CD4-positive, alpha-beta T cell (primary cell): ENCODE measurements at regions of chr6 and their contacts with region 1.

Region 1: GRCh38 chr6:97275809-97276208 is 7.2 kb downstream of the MMS22L start:
- DNase-seq: no peak
- ATAC-seq: no peak
- H3K4me3 ChIP-seq: no peak overlapping the region
- H3K4me3 Mint-ChIP-seq: no peak overlapping the region
- H3K27ac ChIP-seq: no peak overlapping the region
- H3K27ac Mint-ChIP-seq: no peak overlapping the region
- H3K4me1 ChIP-seq: no peaks in the 10 kb centered on the region
- H3K4me1 Mint-ChIP-seq: peaks cover 11% of the 10 kb centered on the region
- H3K27me3 ChIP-seq: no peaks in the 10 kb centered on the region
- H3K27me3 Mint-ChIP-seq: no peaks in the 10 kb centered on the region
- CTCF ChIP-seq: no peak

Region 2: DNA sequence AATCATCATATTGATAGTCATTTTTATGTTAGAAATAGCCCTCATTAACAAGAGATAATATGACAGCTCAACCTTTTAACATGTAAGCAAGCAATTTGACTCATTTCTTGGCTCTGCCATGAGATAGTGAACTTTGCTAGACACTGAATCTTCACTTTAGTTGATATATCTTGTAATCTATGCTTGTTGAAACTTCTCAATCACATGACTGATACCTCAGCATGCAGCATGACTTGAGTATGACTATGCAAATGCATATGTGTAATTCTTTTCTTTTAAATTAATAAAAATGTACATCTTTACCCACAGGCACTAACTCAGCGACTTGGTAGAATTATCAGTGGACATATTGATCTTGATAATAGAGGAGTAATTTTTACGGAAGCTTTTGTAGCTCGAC is 747.6 kb before region 1 on chr6:
- CTCF ChIA-PET with region 1: no interaction called
- POLR2A ChIA-PET with region 1: no interaction called
- intact Hi-C with region 1: loop called in 1 of 2 experiments (anchors 5 kb)
- DNase-seq: no peak
- ATAC-seq: no peak
- H3K4me3 ChIP-seq: no peak overlapping the region
- H3K4me3 Mint-ChIP-seq: no peak overlapping the region
- H3K27ac ChIP-seq: no peak overlapping the region
- H3K27ac Mint-ChIP-seq: no peak overlapping the region
- H3K4me1 ChIP-seq: no peaks in the 10 kb centered on the region
- H3K4me1 Mint-ChIP-seq: peaks cover 60% of the 10 kb centered on the region
- H3K27me3 ChIP-seq: no peaks in the 10 kb centered on the region
- H3K27me3 Mint-ChIP-seq: no peaks in the 10 kb centered on the region
- CTCF ChIP-seq: no peak

Region 3: DNA sequence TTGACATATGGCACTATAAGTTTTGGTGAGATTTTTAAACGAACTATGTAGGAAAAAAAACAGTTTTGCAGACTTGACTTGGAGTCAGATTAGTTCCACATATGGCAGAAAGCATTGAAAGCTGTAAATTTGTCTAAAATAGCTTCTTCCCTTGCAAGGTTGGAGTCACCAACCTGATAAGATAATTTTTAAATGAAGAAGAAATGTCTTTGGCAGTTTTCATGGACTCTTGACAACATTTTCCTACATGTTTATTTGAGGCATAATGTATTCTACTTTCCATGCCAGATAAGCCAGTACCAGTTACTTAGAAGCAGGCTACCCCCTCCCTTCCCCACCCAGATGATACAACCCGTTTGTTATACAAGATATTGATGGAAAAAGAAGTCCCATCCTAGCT is 346.1 kb before region 1 on chr6:
- CTCF ChIA-PET with region 1: no interaction called
- POLR2A ChIA-PET with region 1: no interaction called
- intact Hi-C with region 1: loop called in 1 of 2 experiments (anchors 2 kb)
- DNase-seq: no peak
- ATAC-seq: no peak
- H3K4me3 ChIP-seq: no peak overlapping the region
- H3K4me3 Mint-ChIP-seq: no peak overlapping the region
- H3K27ac ChIP-seq: no peak overlapping the region
- H3K27ac Mint-ChIP-seq: no peak overlapping the region
- H3K4me1 ChIP-seq: peaks cover 4% of the 10 kb centered on the region
- H3K4me1 Mint-ChIP-seq: peaks cover 7% of the 10 kb centered on the region
- H3K27me3 ChIP-seq: no peaks in the 10 kb centered on the region
- H3K27me3 Mint-ChIP-seq: no peaks in the 10 kb centered on the region
- CTCF ChIP-seq: no peak

Region 4: GRCh38 chr6:97394160-97394748 is 118.4 kb after region 1 on chr6:
- CTCF ChIA-PET with region 1: no interaction called
- POLR2A ChIA-PET with region 1: no interaction called
- intact Hi-C with region 1: no loop called
- DNase-seq: peak in 12 of 14 experiments; percentile 3 to 75 (median 26)
- ATAC-seq: peak; percentile 76
- H3K4me3 ChIP-seq: no peak overlapping the region
- H3K4me3 Mint-ChIP-seq: no peak overlapping the region
- H3K27ac ChIP-seq: no peak overlapping the region
- H3K27ac Mint-ChIP-seq: no peak overlapping the region
- H3K4me1 ChIP-seq: no peaks in the 10 kb centered on the region
- H3K4me1 Mint-ChIP-seq: no peaks in the 10 kb centered on the region
- H3K27me3 ChIP-seq: peaks cover 0 to 4% of the 10 kb centered on the region in 2 experiments
- H3K27me3 Mint-ChIP-seq: peaks cover 21% of the 10 kb centered on the region
- CTCF ChIP-seq: peak; percentile 96